A549 (cell line): ENCODE measurements at regions of chr6 and their contacts with region 1.

Region 1: DNA sequence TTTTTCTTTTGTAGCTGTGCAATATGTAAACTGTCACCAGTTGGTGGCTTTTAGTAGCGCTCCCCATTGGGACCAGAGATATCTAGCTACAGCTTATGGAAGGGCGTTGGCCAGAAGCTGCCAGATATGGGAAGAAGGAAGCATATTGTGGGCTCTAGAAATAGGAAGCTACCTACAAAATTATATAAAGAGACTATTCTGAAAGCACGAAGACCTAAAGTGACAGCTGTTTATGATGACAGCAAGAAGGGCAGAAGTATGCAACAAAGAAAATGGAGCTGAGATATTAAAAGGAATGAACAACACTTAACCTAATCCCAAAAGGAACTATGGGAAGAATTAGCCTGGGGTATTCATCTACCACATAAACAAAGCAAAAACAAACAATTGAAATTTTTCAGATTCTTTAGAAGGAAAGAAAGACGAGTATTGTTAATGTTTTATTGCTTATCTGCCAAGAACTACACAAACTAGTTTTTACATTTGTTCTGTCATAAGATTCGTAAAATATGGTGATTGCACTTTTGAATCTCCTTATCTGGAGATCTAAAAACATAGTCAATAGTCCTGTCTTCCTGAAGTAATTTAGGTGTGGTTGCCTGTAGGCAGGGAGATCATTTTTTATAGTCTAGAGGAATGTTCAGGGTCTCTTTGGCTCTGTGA is 81.6 kb downstream of the NCOA7 start:
- DNase-seq: peak; percentile 8 to 60
- ATAC-seq: peak; percentile 47 to 76; a peak in 4 of 6 replicates
- H3K4me3 ChIP-seq: no peak overlapping the region
- H3K27ac ChIP-seq: peak overlapping the region; percentile 65
- H3K4me1 ChIP-seq: peaks cover 49% of the 10 kb centered on the region
- CTCF ChIP-seq: no peak
- EP300 ChIP-seq: no peak
- POLR2A ChIP-seq: no peak
- RAD21 ChIP-seq: no peak

Region 2: GRCh38 chr6:125858427-125859320 is 13.7 kb before region 1 on chr6:
- CTCF ChIA-PET with region 1: interaction called, 17 read pairs
- POLR2A ChIA-PET with region 1: no interaction called
- DNase-seq: peak; percentile 83 to 85
- ATAC-seq: peak; percentile 100
- H3K4me3 ChIP-seq: no peak overlapping the region
- H3K27ac ChIP-seq: peak overlapping the region; percentile 44 to 68; a peak in 4 of 6 replicates
- H3K4me1 ChIP-seq: peaks cover 18% of the 10 kb centered on the region
- CTCF ChIP-seq: peak; percentile 74
- EP300 ChIP-seq: no peak
- POLR2A ChIP-seq: no peak
- RAD21 ChIP-seq: peak; percentile 83 to 95

Region 3: GRCh38 chr6:126143761-126144251 is 271.4 kb after region 1 on chr6:
- CTCF ChIA-PET with region 1: no interaction called
- POLR2A ChIA-PET with region 1: no interaction called
- DNase-seq: no peak
- ATAC-seq: no peak
- H3K4me3 ChIP-seq: no peak overlapping the region
- H3K27ac ChIP-seq: no peak overlapping the region
- H3K4me1 ChIP-seq: 0 out of 3 replicates have a peak, but pooled peaks cover 15% of the 10 kb centered on the region
- CTCF ChIP-seq: no peak
- EP300 ChIP-seq: no peak
- POLR2A ChIP-seq: no peak
- RAD21 ChIP-seq: no peak